Mammary epithelial cell (primary cell): ENCODE measurements at regions of chr14 and their contacts with region 1.

Region 1: GRCh38 chr14:99590712-99591555 is 13.1 kb downstream of the CCDC85C start:
- DNase-seq: no peak
- H3K4me3 ChIP-seq: no peak overlapping the region
- H3K27ac ChIP-seq: no peak overlapping the region
- H3K4me1 ChIP-seq: peaks cover 13% of the 10 kb centered on the region
- H3K27me3 ChIP-seq: no peaks in the 10 kb centered on the region
- CTCF ChIP-seq: no peak

Region 2: DNA sequence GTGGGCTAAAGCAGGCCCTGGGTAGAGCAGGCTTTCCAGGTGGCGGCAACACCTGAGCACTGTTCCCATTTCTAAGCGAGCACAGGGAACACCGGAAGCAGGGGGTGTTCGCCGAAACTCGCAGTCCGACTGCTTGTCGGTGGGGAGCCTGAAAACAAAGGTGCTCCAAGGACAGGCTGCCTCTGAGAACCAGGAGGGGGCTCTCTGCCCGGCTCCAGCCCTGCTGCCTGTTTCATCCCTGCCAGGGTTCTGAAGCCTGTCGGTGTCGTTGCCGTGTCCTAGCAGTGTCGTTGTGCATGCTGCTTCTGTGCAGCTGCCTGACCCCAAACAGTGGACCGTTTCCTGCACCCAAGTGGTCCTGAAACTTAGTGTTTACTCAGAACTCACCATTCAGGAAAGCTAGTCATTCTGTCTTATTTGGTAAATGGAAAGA is 87.9 kb before region 1 on chr14:
- CTCF ChIA-PET with region 1: no interaction called
- dilution Hi-C with region 1: no loop called
- in situ Hi-C with region 1: no loop called
- intact Hi-C with region 1: no loop called
- DNase-seq: no peak
- H3K4me3 ChIP-seq: no peak overlapping the region
- H3K27ac ChIP-seq: no peak overlapping the region
- H3K4me1 ChIP-seq: no peaks in the 10 kb centered on the region
- H3K27me3 ChIP-seq: no peaks in the 10 kb centered on the region
- CTCF ChIP-seq: no peak

Region 3: GRCh38 chr14:99541677-99542470 is 49.1 kb before region 1 on chr14:
- CTCF ChIA-PET with region 1: no interaction called
- dilution Hi-C with region 1: loop called (anchors 5 kb)
- in situ Hi-C with region 1: no loop called
- intact Hi-C with region 1: no loop called
- DNase-seq: no peak
- H3K4me3 ChIP-seq: no peak overlapping the region
- H3K27ac ChIP-seq: no peak overlapping the region
- H3K4me1 ChIP-seq: peaks cover 26% of the 10 kb centered on the region
- H3K27me3 ChIP-seq: no peaks in the 10 kb centered on the region
- CTCF ChIP-seq: no peak

Region 4: GRCh38 chr14:99664058-99664936 is 73.4 kb after region 1 on chr14:
- CTCF ChIA-PET with region 1: no interaction called
- dilution Hi-C with region 1: loop called (anchors 5 kb)
- in situ Hi-C with region 1: no loop called
- intact Hi-C with region 1: no loop called
- DNase-seq: no peak
- H3K4me3 ChIP-seq: no peak overlapping the region
- H3K27ac ChIP-seq: no peak overlapping the region
- H3K4me1 ChIP-seq: no peaks in the 10 kb centered on the region
- H3K27me3 ChIP-seq: peaks cover 2% of the 10 kb centered on the region
- CTCF ChIP-seq: no peak